Vagina (tissue), 2 donors: ENCODE measurements at regions of chr5 and their contacts with region 1.

Region 1: DNA sequence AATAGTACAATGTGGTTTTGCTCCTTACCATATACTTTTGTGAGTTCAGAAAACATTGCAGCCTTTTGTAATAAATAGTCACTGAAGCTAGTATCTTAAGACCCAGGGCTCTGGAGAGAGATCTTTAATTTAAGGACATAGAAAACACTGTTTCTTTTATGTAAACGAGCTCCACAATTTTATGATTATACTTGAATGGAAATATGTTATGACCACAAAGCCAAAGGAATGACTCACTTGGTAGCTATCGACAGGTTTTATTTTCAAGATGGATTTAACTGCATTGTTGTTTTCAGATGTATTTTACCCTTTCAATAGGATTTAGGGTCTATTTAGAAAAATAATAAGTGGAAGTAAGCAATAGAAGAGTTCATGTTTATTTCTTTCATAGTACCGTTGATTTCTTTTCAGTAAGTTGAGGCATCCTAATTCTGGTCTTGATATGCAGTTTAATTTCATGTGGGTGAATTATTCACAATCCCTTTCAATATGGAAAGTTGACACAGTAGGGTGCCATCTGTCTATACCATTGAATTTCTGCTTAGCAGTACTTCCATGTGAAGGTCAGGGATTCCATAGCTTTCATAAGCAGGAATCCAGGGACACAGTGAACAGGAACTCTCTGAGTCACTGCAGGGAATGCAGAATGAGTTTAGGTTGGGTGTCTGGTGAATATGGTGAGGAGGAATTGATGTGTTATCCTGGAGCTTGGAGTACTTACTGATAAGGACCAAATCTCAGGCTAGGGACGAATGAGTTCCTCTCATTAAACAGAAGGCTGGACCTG is 157.6 kb downstream of the CD180 start:
- DNase-seq: no peak
- H3K4me3 ChIP-seq: no peak overlapping the region
- H3K27ac ChIP-seq: no peak overlapping the region
- H3K4me1 ChIP-seq: peaks cover 5% of the 10 kb centered on the region
- H3K27me3 ChIP-seq: no peaks in the 10 kb centered on the region
- CTCF ChIP-seq: no peak
- POLR2A ChIP-seq: no peak

Region 2: GRCh38 chr5:67095346-67096171 is 56.5 kb after region 1 on chr5:
- intact Hi-C with region 1: loop called (anchors 10 kb)
- DNase-seq: no peak
- H3K4me3 ChIP-seq: peak overlapping the region in 1 of 2 donors; percentile 12
- H3K27ac ChIP-seq: peak overlapping the region; percentile 71
- H3K4me1 ChIP-seq: peaks cover 44% of the 10 kb centered on the region
- H3K27me3 ChIP-seq: no peaks in the 10 kb centered on the region
- CTCF ChIP-seq: no peak
- POLR2A ChIP-seq: no peak